ENCODE measurements at regions of chr3 and their contacts with region 1.

Region 1: GRCh38 chr3:114464548-114464947 is 170.7 kb downstream of the TIGIT start:
- DNase-seq: no peak
- ATAC-seq: peak; percentile 97
- H3K4me3 Mint-ChIP-seq: peak overlapping the region; percentile 42
- H3K27ac Mint-ChIP-seq: peak overlapping the region; percentile 85
- H3K4me1 Mint-ChIP-seq: peaks cover 40% of the 10 kb centered on the region
- H3K27me3 Mint-ChIP-seq: no peaks in the 10 kb centered on the region
- CTCF ChIP-seq: no peak

Region 2: DNA sequence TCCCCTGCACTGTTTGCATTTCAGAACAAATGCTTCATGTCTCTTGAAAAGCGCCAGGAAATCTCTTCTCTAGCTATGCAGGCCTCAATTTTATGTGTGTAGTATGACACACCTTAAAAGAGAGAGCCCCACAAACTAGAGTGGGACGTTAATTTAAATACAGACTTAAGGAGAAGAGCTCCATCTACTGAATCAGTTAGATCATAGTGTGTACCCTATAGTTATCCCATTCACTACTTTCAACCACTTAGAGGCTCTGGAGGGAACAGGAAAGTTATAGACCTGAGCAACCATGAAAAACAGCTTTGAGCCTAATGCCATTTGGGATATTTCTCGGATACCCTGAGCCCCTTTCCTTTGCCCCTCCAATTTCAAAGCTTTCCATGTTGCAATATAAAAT is 17.0 kb before region 1 on chr3:
- CTCF ChIA-PET with region 1: interaction called, 6 read pairs
- POLR2A ChIA-PET with region 1: interaction called, 47 read pairs
- intact Hi-C with region 1: loop called (anchors 2 kb)
- DNase-seq: no peak
- ATAC-seq: no peak
- H3K4me3 Mint-ChIP-seq: peak overlapping the region; percentile 41
- H3K27ac Mint-ChIP-seq: peak overlapping the region; percentile 71
- H3K4me1 Mint-ChIP-seq: peaks cover 69% of the 10 kb centered on the region
- H3K27me3 Mint-ChIP-seq: no peaks in the 10 kb centered on the region
- CTCF ChIP-seq: no peak

Region 3: DNA sequence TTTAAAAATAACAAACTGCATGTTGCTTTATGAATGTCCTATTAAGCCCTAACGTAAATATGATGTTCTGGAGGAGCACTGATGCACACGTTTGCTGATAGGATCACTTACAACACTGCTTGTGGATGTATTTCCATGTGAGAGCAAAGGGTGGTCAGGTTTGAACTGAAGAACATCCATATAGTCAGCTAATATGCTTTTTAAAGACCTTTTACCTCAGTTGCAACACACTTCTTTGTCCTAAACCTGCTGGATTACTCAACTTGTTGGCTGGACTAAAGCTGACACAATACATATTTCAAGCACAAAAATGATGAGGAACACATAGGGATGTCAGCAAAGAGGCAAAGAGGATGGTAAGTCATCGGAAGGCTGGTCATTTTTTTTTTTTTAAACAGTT is 15.9 kb after region 1 on chr3:
- CTCF ChIA-PET with region 1: no interaction called
- POLR2A ChIA-PET with region 1: no interaction called
- intact Hi-C with region 1: loop called (anchors 2 kb)
- DNase-seq: no peak
- ATAC-seq: no peak
- H3K4me3 Mint-ChIP-seq: no peak overlapping the region
- H3K27ac Mint-ChIP-seq: no peak overlapping the region
- H3K4me1 Mint-ChIP-seq: peaks cover 10% of the 10 kb centered on the region
- H3K27me3 Mint-ChIP-seq: no peaks in the 10 kb centered on the region
- CTCF ChIP-seq: no peak

Region 4: DNA sequence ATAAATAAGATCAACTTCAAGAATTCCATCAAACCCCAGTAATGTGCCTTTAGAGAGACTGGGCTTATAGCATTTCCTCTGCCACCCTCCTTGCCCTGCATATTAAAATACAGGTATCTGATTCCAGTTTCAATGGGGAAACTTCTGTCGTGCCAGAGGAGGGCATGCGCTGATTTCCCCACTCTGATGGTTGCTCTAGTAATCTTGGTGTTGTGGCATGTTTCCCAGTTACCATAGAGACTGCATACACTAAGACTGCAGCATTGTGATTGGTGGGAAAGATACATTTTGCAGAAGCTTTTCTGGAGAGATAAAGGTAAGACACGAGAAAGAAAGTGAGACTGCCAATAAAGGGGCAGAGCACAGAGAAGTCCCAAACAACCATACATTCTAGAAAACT is 54.9 kb after region 1 on chr3:
- CTCF ChIA-PET with region 1: no interaction called
- POLR2A ChIA-PET with region 1: no interaction called
- intact Hi-C with region 1: loop called (anchors 2 kb)
- DNase-seq: peak; percentile 21
- ATAC-seq: peak; percentile 97
- H3K4me3 Mint-ChIP-seq: no peak overlapping the region
- H3K27ac Mint-ChIP-seq: no peak overlapping the region
- H3K4me1 Mint-ChIP-seq: no peaks in the 10 kb centered on the region
- H3K27me3 Mint-ChIP-seq: no peaks in the 10 kb centered on the region
- CTCF ChIP-seq: no peak

Region 5: GRCh38 chr3:114551770-114552526 is 87.4 kb after region 1 on chr3:
- CTCF ChIA-PET with region 1: no interaction called
- POLR2A ChIA-PET with region 1: no interaction called
- intact Hi-C with region 1: no loop called
- DNase-seq: no peak
- ATAC-seq: no peak
- H3K4me3 Mint-ChIP-seq: no peak overlapping the region
- H3K27ac Mint-ChIP-seq: no peak overlapping the region
- H3K4me1 Mint-ChIP-seq: no peaks in the 10 kb centered on the region
- H3K27me3 Mint-ChIP-seq: no peaks in the 10 kb centered on the region
- CTCF ChIP-seq: no peak

Measured in activated B cell treated with CpG ODN at 0.5 μM for 24 hours (primary cell).